ENCODE measurements at regions of chr7 and their contacts with region 1.

Region 1: DNA sequence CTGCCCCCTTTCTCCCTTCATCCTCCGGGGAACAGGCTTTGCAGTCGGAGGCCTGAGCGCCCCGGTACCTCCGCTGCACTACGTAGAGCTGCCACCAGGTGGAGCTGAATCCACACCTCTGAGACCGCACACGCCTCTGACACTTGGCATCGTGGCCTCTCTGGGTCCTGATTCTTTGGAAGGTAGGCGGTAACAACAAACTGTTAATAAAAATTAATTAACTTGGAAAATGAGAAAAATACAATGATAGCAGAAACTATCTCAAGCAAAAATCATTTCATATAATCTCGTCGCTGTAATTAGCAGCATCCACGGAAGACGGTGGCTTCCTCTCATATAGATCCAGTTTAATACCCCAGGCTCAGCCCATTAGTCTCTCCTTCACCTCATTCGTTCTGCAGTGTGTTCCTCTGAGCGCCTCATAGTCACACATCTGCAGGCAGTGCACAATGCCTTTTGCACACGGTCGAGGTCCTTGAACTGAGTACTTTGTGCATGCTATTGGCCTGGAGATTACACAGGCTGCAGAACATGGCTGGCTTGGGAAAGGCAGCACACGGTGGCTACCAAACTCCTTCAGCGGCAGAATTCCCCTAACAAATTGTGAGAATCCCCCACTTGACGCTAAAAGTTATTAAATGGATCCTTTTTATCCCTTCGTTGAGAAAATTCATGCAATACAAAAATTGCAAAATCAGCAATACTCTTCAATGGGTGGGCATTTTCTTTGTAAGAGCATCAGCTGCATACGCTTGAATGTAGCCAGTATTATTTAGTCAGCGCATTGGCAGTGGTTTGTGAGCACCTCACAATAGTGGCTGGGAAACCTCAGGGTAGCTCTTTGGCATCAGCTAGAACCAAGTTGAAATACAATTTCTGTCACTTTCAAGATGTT is 18.7 kb downstream of the OR9A2 start:
- DNase-seq: peak; percentile 66 to 92 (median 80)
- ATAC-seq: peak; percentile 98
- H3K4me3 ChIP-seq: no peak overlapping the region
- H3K27ac ChIP-seq: no peak overlapping the region
- H3K4me1 ChIP-seq: peaks cover 0 to 4% of the 10 kb centered on the region in 2 donors
- H3K27me3 ChIP-seq: peaks cover 0 to 7% of the 10 kb centered on the region in 2 donors
- CTCF ChIP-seq: peak; percentile 93 to 98

Region 2: GRCh38 chr7:142654398-142654797 is 353.9 kb before region 1 on chr7:
- intact Hi-C with region 1: no loop called
- DNase-seq: no peak
- ATAC-seq: no peak
- H3K4me3 ChIP-seq: no peak overlapping the region
- H3K27ac ChIP-seq: no peak overlapping the region
- H3K4me1 ChIP-seq: no peaks in the 10 kb centered on the region
- H3K27me3 ChIP-seq: no peaks in the 10 kb centered on the region
- CTCF ChIP-seq: no peak

Region 3: DNA sequence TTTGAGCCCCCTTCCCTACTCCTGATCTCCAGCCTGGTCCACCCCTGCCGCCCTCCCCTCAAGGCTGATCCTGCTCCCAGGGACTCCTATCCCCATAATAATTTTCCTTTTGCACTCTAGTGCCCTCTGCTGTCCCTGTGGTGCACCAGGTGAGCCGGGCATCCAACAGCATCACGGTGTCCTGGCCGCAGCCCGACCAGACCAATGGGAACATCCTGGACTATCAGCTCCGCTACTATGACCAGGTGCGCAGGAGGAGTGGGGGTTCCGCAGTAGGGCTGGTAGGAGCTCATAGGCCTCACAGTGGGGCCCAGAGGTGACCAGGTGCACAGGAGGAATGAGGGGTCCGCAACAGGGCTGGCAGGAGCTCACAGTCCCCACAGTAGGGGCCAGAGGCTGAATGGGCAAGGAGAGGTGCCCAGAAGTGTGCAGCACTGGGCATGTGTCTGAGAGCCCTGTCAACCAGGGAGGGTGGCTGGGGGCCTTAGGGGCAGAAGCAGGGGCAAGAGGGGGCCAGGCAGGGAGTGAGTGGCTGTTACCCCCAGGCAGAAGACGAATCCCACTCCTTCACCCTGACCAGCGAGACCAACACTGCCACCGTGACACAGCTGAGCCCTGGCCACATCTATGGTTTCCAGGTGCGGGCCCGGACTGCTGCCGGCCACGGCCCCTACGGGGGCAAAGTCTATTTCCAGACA is 141.7 kb before region 1 on chr7:
- intact Hi-C with region 1: loop called in 1 of 2 experiments (anchors 10 kb)
- DNase-seq: peak in 1 of 4 donors; percentile 33
- ATAC-seq: peak; percentile 86
- H3K4me3 ChIP-seq: no peak overlapping the region
- H3K27ac ChIP-seq: no peak overlapping the region
- H3K4me1 ChIP-seq: no peaks in the 10 kb centered on the region
- H3K27me3 ChIP-seq: peaks cover 0 to 17% of the 10 kb centered on the region in 2 donors
- CTCF ChIP-seq: peak; percentile 38 to 56

Region 4: DNA sequence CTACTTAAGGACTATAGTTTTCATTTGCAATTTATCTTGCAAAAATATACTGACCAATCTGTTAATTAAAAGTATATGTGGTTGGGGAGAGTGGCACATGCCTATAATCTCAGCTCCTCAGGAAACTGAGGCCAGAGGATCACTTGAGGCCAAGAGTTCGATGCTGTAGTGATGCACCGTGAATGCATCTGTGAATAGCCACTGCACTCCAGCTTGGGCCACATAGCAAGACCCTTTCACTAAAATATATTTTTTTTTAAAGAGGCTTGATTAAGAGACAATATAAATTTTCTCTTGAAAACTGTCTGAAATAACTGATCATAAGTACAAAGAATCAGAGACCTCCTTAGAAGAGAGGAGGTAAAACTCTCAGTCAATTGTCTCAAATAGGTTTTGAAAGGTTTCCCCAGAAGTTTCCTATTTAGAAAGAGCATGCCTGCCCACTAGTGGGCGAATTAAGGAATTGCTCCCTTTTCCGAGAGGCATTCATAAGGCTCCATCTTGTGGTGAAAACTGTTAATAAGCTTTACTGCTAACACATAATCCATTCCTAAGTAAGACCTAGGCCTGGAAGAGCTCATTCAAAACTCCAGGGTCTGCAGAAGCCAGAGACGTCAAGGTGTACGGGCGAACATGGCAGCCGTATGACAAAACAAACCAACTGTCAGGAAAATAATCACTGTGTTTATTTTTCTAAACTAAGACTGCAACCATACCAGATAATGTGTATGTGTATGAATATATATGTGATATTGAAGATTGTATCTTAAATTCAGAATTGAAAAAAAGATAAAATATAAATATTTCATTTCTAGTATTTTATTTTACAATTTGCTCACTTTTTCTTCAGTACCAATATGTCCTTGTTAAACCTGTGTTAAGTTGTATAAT is 206.8 kb after region 1 on chr7:
- intact Hi-C with region 1: loop called (anchors 2 to 10 kb)
- DNase-seq: peak in 2 of 4 donors; percentile 74 to 84
- ATAC-seq: peak; percentile 100
- H3K4me3 ChIP-seq: no peak overlapping the region
- H3K27ac ChIP-seq: no peak overlapping the region
- H3K4me1 ChIP-seq: no peaks in the 10 kb centered on the region
- H3K27me3 ChIP-seq: no peaks in the 10 kb centered on the region
- CTCF ChIP-seq: peak; percentile 98 to 100